CD4-positive, alpha-beta memory T cell (primary cell): ENCODE measurements at regions of chr4 and their contacts with region 1.

Region 1: GRCh38 chr4:99808260-99808857 is 8.3 kb upstream of the DAPP1 start:
- DNase-seq: peak; percentile 69 to 76 (median 70)
- H3K4me3 ChIP-seq: no peak overlapping the region
- H3K4me3 Mint-ChIP-seq: peak overlapping the region in 1 of 8 donors; percentile 62
- H3K27ac ChIP-seq: no peak overlapping the region
- H3K27ac Mint-ChIP-seq: no peak overlapping the region
- H3K4me1 ChIP-seq: no peaks in the 10 kb centered on the region
- H3K4me1 Mint-ChIP-seq: peaks cover 5 to 6% (median 5%) of the 10 kb centered on the region in 4 donors
- H3K27me3 ChIP-seq: no peaks in the 10 kb centered on the region
- H3K27me3 Mint-ChIP-seq: peaks cover 4 to 5% of the 10 kb centered on the region in 2 donors

Region 2: GRCh38 chr4:98861100-98861884 is 947.1 kb before region 1 on chr4:
- CTCF ChIA-PET with region 1: no interaction called
- POLR2A ChIA-PET with region 1: no interaction called
- intact Hi-C with region 1: no loop called
- DNase-seq: no peak
- H3K4me3 ChIP-seq: no peak overlapping the region
- H3K4me3 Mint-ChIP-seq: no peak overlapping the region
- H3K27ac ChIP-seq: no peak overlapping the region
- H3K27ac Mint-ChIP-seq: no peak overlapping the region
- H3K4me1 ChIP-seq: no peaks in the 10 kb centered on the region
- H3K4me1 Mint-ChIP-seq: peaks cover 0 to 2% (median 0%) of the 10 kb centered on the region in 4 donors
- H3K27me3 ChIP-seq: no peaks in the 10 kb centered on the region
- H3K27me3 Mint-ChIP-seq: peaks cover 2% of the 10 kb centered on the region in 2 donors

Region 3: GRCh38 chr4:99305638-99306400 is 502.5 kb before region 1 on chr4:
- CTCF ChIA-PET with region 1: no interaction called
- POLR2A ChIA-PET with region 1: no interaction called
- intact Hi-C with region 1: no loop called
- DNase-seq: no peak
- H3K4me3 ChIP-seq: no peak overlapping the region
- H3K4me3 Mint-ChIP-seq: no peak overlapping the region
- H3K27ac ChIP-seq: no peak overlapping the region
- H3K27ac Mint-ChIP-seq: no peak overlapping the region
- H3K4me1 ChIP-seq: no peaks in the 10 kb centered on the region
- H3K4me1 Mint-ChIP-seq: no peaks in the 10 kb centered on the region
- H3K27me3 ChIP-seq: no peaks in the 10 kb centered on the region
- H3K27me3 Mint-ChIP-seq: peaks cover 0 to 1% of the 10 kb centered on the region in 2 donors

Region 4: GRCh38 chr4:99473131-99473530 is 335.2 kb before region 1 on chr4:
- CTCF ChIA-PET with region 1: interaction called, 4 read pairs
- POLR2A ChIA-PET with region 1: no interaction called
- intact Hi-C with region 1: loop called (anchors 10 kb)
- DNase-seq: no peak
- H3K4me3 ChIP-seq: no peak overlapping the region
- H3K4me3 Mint-ChIP-seq: no peak overlapping the region
- H3K27ac ChIP-seq: no peak overlapping the region
- H3K27ac Mint-ChIP-seq: no peak overlapping the region
- H3K4me1 ChIP-seq: no peaks in the 10 kb centered on the region
- H3K4me1 Mint-ChIP-seq: no peaks in the 10 kb centered on the region
- H3K27me3 ChIP-seq: no peaks in the 10 kb centered on the region
- H3K27me3 Mint-ChIP-seq: peaks cover 3 to 6% of the 10 kb centered on the region in 2 donors

Region 5: DNA sequence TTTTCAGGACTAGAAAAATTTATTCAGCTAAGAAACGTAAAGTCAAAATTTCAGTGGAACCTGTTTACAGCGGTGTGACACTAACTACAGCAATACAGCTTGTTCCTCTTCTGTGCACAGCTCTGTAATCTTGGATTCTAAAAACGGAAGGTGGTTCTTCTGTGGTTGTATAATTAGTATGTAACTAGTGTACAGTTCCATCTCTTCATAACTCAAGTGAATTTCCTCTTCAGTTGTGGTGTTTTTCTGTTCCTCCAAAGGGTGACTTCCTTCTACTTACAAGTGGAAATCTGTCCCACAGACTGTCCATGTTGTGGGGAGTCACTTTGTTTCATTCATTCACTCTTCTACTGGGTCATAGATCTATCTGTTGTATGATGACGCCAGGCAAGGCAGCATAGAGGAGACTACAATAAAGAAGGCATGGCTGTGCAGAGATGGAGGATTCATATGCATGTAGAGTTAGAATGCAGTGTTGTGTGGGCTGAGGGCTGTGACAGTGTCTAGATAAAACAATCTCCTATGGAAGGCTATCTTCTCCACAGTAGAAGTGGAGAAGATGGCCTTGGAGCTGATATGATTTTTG is 13.7 kb after region 1 on chr4:
- CTCF ChIA-PET with region 1: interaction called, 32 read pairs
- POLR2A ChIA-PET with region 1: interaction called, 13 read pairs
- intact Hi-C with region 1: no loop called
- DNase-seq: no peak
- H3K4me3 ChIP-seq: no peak overlapping the region
- H3K4me3 Mint-ChIP-seq: peak overlapping the region in 6 of 8 donors; percentile 2 to 71 (median 60)
- H3K27ac ChIP-seq: no peak overlapping the region
- H3K27ac Mint-ChIP-seq: peak overlapping the region in 6 of 7 donors; percentile 8 to 93 (median 48)
- H3K4me1 ChIP-seq: peaks cover 62% of the 10 kb centered on the region
- H3K4me1 Mint-ChIP-seq: peaks cover 66 to 83% (median 75%) of the 10 kb centered on the region in 4 donors
- H3K27me3 ChIP-seq: no peaks in the 10 kb centered on the region
- H3K27me3 Mint-ChIP-seq: no peaks in the 10 kb centered on the region

Region 6: GRCh38 chr4:99847362-99847976 is 39.1 kb after region 1 on chr4:
- CTCF ChIA-PET with region 1: interaction called, 37 read pairs
- POLR2A ChIA-PET with region 1: no interaction called
- intact Hi-C with region 1: no loop called
- DNase-seq: peak; percentile 29 to 44 (median 33)
- H3K4me3 ChIP-seq: peak overlapping the region in 1 of 2 donors; percentile 38
- H3K4me3 Mint-ChIP-seq: peak overlapping the region; percentile 63 to 86 (median 76)
- H3K27ac ChIP-seq: peak overlapping the region; percentile 37
- H3K27ac Mint-ChIP-seq: peak overlapping the region; percentile 77 to 98 (median 94)
- H3K4me1 ChIP-seq: peaks cover 68% of the 10 kb centered on the region
- H3K4me1 Mint-ChIP-seq: peaks cover 39 to 70% (median 55%) of the 10 kb centered on the region in 4 donors
- H3K27me3 ChIP-seq: no peaks in the 10 kb centered on the region
- H3K27me3 Mint-ChIP-seq: no peaks in the 10 kb centered on the region

Region 7: DNA sequence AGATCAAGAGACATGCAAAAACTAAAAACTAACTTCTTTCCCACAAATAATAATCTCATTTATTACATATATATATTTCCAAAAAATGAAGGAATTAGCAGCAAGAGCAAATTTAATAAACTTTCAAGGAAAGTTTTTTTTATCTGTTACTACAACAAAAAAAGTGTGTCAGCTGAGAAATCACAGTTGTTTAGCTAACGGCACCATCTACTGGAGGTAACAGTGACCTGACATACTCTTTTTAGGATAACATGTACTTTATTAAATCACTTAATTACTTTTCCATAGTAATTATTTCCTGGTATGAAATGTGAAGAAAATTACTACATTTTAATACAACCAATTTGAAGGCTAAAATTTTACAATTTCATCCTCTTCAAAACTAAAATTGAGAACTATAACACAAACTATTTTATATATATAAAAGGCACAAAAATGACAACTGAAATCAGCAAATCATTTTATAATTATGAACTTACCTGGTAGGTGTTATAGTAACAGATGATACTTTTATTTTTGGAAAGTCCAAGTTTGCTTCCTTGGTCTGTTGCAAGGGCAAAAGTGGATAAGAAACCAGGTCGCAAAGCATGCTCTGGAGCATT is 76.8 kb after region 1 on chr4:
- CTCF ChIA-PET with region 1: interaction called, 24 read pairs
- POLR2A ChIA-PET with region 1: no interaction called
- intact Hi-C with region 1: loop called (anchors 1 kb)
- DNase-seq: peak; percentile 47 to 61 (median 53)
- H3K4me3 ChIP-seq: no peak overlapping the region
- H3K4me3 Mint-ChIP-seq: no peak overlapping the region
- H3K27ac ChIP-seq: no peak overlapping the region
- H3K27ac Mint-ChIP-seq: no peak overlapping the region
- H3K4me1 ChIP-seq: no peaks in the 10 kb centered on the region
- H3K4me1 Mint-ChIP-seq: peaks cover 6 to 11% (median 6%) of the 10 kb centered on the region in 4 donors
- H3K27me3 ChIP-seq: no peaks in the 10 kb centered on the region
- H3K27me3 Mint-ChIP-seq: no peaks in the 10 kb centered on the region